Natural killer cell (primary cell): ENCODE measurements at regions of chr3 and their contacts with region 1.

Region 1: DNA sequence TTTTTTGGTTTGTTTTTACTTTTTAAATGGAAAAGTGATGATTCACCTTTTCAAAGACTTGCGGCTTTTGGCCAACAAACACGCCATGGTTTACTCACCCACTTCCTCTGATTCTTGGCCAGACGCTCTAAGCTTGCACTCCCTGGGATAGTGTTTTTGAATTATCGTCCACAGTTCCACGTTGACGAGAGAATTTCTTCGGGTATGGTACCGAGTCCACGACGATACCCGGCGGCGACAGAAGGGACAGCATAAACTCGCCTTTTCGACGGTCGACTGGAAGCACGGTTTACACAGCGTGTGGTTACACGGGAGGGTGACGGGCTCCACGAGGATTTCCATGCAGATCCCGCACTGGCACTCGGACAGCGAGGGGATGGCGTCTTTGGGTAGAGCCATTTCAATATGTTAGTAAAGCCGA is 783 bp downstream of the RNF168 start:
- DNase-seq: peak; percentile 46 to 82
- ATAC-seq: peak; percentile 39 to 63 (median 54)
- H3K4me3 ChIP-seq: peak overlapping the region; percentile 87
- H3K4me3 Mint-ChIP-seq: peak overlapping the region; percentile 99
- H3K27ac ChIP-seq: peak overlapping the region; percentile 86
- H3K27ac Mint-ChIP-seq: peak overlapping the region; percentile 94 to 97
- H3K4me1 ChIP-seq: peaks cover 30% of the 10 kb centered on the region
- H3K4me1 Mint-ChIP-seq: peaks cover 50 to 56% of the 10 kb centered on the region in 2 donors
- H3K27me3 ChIP-seq: no peaks in the 10 kb centered on the region
- H3K27me3 Mint-ChIP-seq: no peaks in the 10 kb centered on the region
- CTCF ChIP-seq: no peak

Region 2: GRCh38 chr3:195705081-195705991 is 797.4 kb before region 1 on chr3:
- intact Hi-C with region 1: no loop called
- DNase-seq: no peak
- ATAC-seq: no peak
- H3K4me3 ChIP-seq: no peak overlapping the region
- H3K4me3 Mint-ChIP-seq: no peak overlapping the region
- H3K27ac ChIP-seq: no peak overlapping the region
- H3K27ac Mint-ChIP-seq: no peak overlapping the region
- H3K4me1 ChIP-seq: no peaks in the 10 kb centered on the region
- H3K4me1 Mint-ChIP-seq: peaks cover 0 to 11% of the 10 kb centered on the region in 2 donors
- H3K27me3 ChIP-seq: no peaks in the 10 kb centered on the region
- H3K27me3 Mint-ChIP-seq: no peaks in the 10 kb centered on the region
- CTCF ChIP-seq: no peak

Region 3: GRCh38 chr3:195909644-195910508 is 592.9 kb before region 1 on chr3:
- intact Hi-C with region 1: loop called (anchors 5 kb)
- DNase-seq: peak; percentile 81 to 94
- ATAC-seq: peak; percentile 52 to 76 (median 60)
- H3K4me3 ChIP-seq: peak overlapping the region; percentile 39
- H3K4me3 Mint-ChIP-seq: peak overlapping the region; percentile 47
- H3K27ac ChIP-seq: peak overlapping the region; percentile 57
- H3K27ac Mint-ChIP-seq: peak overlapping the region; percentile 48 to 97
- H3K4me1 ChIP-seq: peaks cover 42% of the 10 kb centered on the region
- H3K4me1 Mint-ChIP-seq: peaks cover 34 to 38% of the 10 kb centered on the region in 2 donors
- H3K27me3 ChIP-seq: no peaks in the 10 kb centered on the region
- H3K27me3 Mint-ChIP-seq: no peaks in the 10 kb centered on the region
- CTCF ChIP-seq: no peak

Region 4: GRCh38 chr3:196136026-196136984 is 366.5 kb before region 1 on chr3:
- intact Hi-C with region 1: no loop called
- DNase-seq: no peak
- ATAC-seq: no peak
- H3K4me3 ChIP-seq: no peak overlapping the region
- H3K4me3 Mint-ChIP-seq: no peak overlapping the region
- H3K27ac ChIP-seq: no peak overlapping the region
- H3K27ac Mint-ChIP-seq: no peak overlapping the region
- H3K4me1 ChIP-seq: peaks cover 3% of the 10 kb centered on the region
- H3K4me1 Mint-ChIP-seq: no peaks in the 10 kb centered on the region
- H3K27me3 ChIP-seq: no peaks in the 10 kb centered on the region
- H3K27me3 Mint-ChIP-seq: peaks cover 0 to 3% of the 10 kb centered on the region in 2 donors
- CTCF ChIP-seq: no peak

Region 5: GRCh38 chr3:196317687-196318467 is 184.9 kb before region 1 on chr3 and contains the start of gene DYNLT2B:
- intact Hi-C with region 1: loop called (anchors 5 kb)
- DNase-seq: peak; percentile 87 to 95
- ATAC-seq: peak; percentile 90 to 96 (median 90)
- H3K4me3 ChIP-seq: peak within 1 kb of the TSS; percentile 86
- H3K4me3 Mint-ChIP-seq: peak within 1 kb of the TSS; percentile 95
- H3K27ac ChIP-seq: peak within 1 kb of the TSS; percentile 93
- H3K27ac Mint-ChIP-seq: peak within 1 kb of the TSS; percentile 72 to 96
- H3K4me1 ChIP-seq: peaks cover 13% of the 10 kb centered on the region
- H3K4me1 Mint-ChIP-seq: peaks cover 0 to 25% of the 10 kb centered on the region in 2 donors
- H3K27me3 ChIP-seq: no peaks in the 10 kb centered on the region
- H3K27me3 Mint-ChIP-seq: no peaks in the 10 kb centered on the region
- CTCF ChIP-seq: no peak
- total RNA-seq, gene DYNLT2B: 3.6 to 7.3 (median 5.4) TPM

Region 6: DNA sequence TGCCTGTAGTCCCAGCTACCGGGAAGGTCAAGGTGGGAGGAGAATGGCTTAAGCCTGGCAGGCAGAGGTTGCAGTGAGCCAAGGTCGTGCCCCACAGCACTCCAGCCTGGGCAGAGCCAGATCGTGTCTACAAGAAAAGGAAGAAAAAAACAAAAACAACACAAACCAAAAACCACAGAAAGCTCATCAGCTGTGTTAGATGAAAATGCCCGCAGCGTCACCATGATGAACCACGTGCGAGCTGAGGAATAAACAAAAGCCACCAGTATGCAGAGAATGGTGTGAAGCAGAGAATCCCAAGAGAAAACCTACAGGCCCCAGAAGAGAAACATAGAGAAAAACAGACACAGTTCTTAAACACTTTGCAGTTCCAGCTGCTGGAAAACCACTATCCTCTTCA is 144.9 kb before region 1 on chr3:
- intact Hi-C with region 1: loop called (anchors 1 kb)
- DNase-seq: peak; percentile 55 to 57
- ATAC-seq: peak; percentile 80 to 88 (median 81)
- H3K4me3 ChIP-seq: no peak overlapping the region
- H3K4me3 Mint-ChIP-seq: peak overlapping the region; percentile 73
- H3K27ac ChIP-seq: peak overlapping the region; percentile 13
- H3K27ac Mint-ChIP-seq: peak overlapping the region; percentile 74 to 82
- H3K4me1 ChIP-seq: peaks cover 15% of the 10 kb centered on the region
- H3K4me1 Mint-ChIP-seq: peaks cover 19 to 44% of the 10 kb centered on the region in 2 donors
- H3K27me3 ChIP-seq: no peaks in the 10 kb centered on the region
- H3K27me3 Mint-ChIP-seq: no peaks in the 10 kb centered on the region
- CTCF ChIP-seq: no peak

Region 7: DNA sequence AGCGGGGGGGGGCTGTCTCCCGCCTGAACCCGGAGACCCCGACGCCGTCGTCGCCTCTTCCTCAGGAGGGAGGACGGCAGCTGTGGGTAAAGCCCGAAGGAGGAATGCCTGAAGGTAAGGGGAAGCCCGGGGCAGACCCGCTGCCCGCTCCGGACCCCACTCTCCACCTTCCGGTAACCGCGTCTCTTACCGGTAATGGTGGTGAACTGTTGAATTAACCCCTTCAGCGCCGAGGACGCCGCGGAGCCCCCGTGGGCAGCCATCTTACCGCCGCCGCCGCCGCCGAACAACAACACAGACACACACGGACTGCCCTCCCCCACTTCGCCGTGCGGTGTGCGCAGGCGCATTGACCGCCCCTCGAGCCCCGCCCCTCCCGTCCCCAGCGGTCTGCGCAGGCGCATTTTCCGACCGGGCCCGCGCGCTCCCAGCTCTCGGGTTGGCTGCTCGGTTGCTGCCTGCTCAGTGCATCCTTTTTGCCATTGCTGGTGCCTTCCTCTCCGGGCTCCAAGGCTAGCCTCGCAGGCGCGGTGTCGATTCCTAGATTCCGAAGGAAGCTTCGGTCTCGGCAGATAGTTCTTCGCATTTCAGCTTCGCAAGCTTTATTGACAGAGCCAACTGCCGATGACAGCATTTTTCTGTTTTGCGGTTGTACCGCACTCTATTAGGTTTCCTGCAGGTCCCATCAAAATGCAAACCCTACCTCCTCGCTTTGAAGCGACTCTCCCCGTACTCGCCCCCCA is 70.5 kb before region 1 on chr3 and contains the start of gene UBXN7:
- intact Hi-C with region 1: loop called (anchors 2 kb)
- DNase-seq: peak; percentile 94 to 98
- ATAC-seq: peak; percentile 87 to 96 (median 93)
- H3K4me3 ChIP-seq: peak within 1 kb of the TSS; percentile 86
- H3K4me3 Mint-ChIP-seq: peak within 1 kb of the TSS; percentile 97
- H3K27ac ChIP-seq: peak within 1 kb of the TSS; percentile 81
- H3K27ac Mint-ChIP-seq: peak within 1 kb of the TSS; percentile 94 to 96
- H3K4me1 ChIP-seq: peaks cover 11% of the 10 kb centered on the region
- H3K4me1 Mint-ChIP-seq: peaks cover 21 to 27% of the 10 kb centered on the region in 2 donors
- H3K27me3 ChIP-seq: no peaks in the 10 kb centered on the region
- H3K27me3 Mint-ChIP-seq: no peaks in the 10 kb centered on the region
- CTCF ChIP-seq: no peak
- total RNA-seq, gene UBXN7: 82.0 to 97.2 (median 82.4) TPM

Region 8: DNA sequence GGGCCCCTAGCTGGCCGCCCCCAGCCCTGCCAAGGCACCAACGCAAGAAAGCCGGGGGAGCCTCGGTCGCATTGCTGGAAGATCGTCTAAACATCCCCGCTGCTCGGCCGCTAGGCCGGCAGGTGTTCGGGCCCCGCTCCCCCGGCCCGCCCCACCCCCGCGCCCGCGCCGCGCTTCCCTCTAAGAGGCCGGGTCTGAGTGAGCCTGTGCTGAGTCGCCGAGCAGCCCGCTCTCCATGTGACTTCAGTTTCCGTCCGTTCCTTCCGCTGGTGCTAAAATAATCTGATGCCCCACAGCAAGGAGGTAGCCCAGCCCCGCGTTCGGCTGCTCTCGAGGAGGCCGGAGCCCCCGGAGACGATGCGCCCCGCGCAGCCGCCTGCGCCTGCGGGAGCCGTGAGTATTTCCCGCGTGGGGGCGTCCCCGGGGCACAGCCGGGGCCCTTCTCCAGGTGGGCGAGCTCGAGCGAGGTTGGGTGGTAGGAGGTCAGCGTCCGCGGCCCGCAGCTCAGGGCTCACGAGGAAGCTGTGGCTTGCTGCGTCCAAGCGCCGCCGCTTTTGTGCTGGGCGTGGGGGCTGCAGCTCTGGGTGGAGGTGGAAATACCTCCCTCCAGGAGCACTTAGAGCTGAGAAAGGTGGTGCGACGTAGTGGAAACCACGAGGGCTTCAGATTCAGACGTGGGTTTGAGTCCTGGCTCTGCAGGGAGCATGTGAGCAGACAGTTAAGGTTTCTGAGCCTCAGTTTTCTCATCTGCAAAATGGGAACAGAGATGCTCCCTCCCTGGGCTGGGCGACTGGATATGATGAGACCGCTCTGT is 136.9 kb after region 1 on chr3 and contains the start of gene NRROS:
- intact Hi-C with region 1: loop called (anchors 5 kb)
- DNase-seq: peak; percentile 66 to 76
- ATAC-seq: peak; percentile 37 to 79 (median 64)
- H3K4me3 ChIP-seq: peak within 1 kb of the TSS; percentile 88
- H3K4me3 Mint-ChIP-seq: peak within 1 kb of the TSS; percentile 93
- H3K27ac ChIP-seq: peak within 1 kb of the TSS; percentile 81
- H3K27ac Mint-ChIP-seq: peak within 1 kb of the TSS; percentile 96 to 98
- H3K4me1 ChIP-seq: peaks cover 89% of the 10 kb centered on the region
- H3K4me1 Mint-ChIP-seq: peaks cover 91 to 96% of the 10 kb centered on the region in 2 donors
- H3K27me3 ChIP-seq: no peaks in the 10 kb centered on the region
- H3K27me3 Mint-ChIP-seq: no peaks in the 10 kb centered on the region
- CTCF ChIP-seq: no peak
- total RNA-seq, gene NRROS: 32.5 to 56.3 (median 56.2) TPM

Region 9: GRCh38 chr3:196650740-196651311 is 148.0 kb after region 1 on chr3:
- intact Hi-C with region 1: no loop called
- DNase-seq: no peak
- ATAC-seq: peak in 2 of 3 donors; percentile 20 to 64
- H3K4me3 ChIP-seq: no peak overlapping the region
- H3K4me3 Mint-ChIP-seq: peak overlapping the region; percentile 68
- H3K27ac ChIP-seq: no peak overlapping the region
- H3K27ac Mint-ChIP-seq: peak overlapping the region; percentile 27 to 72
- H3K4me1 ChIP-seq: peaks cover 68% of the 10 kb centered on the region
- H3K4me1 Mint-ChIP-seq: peaks cover 72 to 74% of the 10 kb centered on the region in 2 donors
- H3K27me3 ChIP-seq: no peaks in the 10 kb centered on the region
- H3K27me3 Mint-ChIP-seq: no peaks in the 10 kb centered on the region
- CTCF ChIP-seq: no peak